Activated naive CD4-positive, alpha-beta T cell treated with anti-CD3 and anti-CD28 coated beads for 36 hours (primary cell): ENCODE measurements at regions of chr2 and their contacts with region 1.

Region 1: DNA sequence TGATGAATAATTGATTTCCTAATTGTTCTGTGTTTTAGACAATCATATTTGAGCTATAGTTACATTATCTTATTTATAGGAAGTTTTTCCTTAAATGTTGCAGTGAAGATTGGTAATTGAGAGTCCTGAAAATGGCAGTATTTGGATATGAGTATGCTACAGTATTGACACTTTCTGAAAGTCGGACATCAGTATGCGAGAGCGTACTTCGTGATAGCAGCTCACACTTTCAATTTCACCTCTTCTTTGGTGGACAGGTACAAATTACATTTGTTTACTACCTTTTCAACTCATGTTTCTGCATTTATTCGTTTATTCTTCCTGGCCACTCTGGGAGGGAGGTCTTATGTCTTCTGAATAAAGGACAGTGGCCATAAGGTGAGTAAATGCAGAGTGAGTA is 38.7 kb downstream of the EML4 start:
- DNase-seq: no peak
- H3K4me3 Mint-ChIP-seq: no peak overlapping the region
- H3K27ac Mint-ChIP-seq: no peak overlapping the region
- H3K4me1 Mint-ChIP-seq: peaks cover 46% of the 10 kb centered on the region
- H3K27me3 Mint-ChIP-seq: no peaks in the 10 kb centered on the region

Region 2: DNA sequence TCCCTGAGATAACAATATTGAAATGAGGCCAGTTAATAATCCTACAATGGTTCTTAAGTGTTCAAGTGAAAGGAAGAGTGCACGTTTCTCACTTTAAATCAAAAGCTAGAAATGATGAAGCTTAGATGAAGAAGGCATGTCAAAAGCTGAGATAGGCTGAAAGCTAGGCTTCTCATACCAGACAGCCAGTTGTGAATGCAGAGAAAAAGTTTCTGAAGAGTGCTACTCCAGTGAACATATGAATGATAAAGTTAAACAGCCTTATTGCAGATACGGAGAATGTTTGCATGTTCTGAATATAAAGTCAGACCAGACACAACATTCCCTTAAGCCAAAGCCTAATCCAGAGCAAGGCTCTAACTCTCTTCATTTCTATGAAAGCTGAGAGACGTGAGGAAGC is 12.7 kb after region 1 on chr2:
- CTCF ChIA-PET with region 1: no interaction called
- intact Hi-C with region 1: loop called (anchors 2 kb)
- DNase-seq: no peak
- H3K4me3 Mint-ChIP-seq: no peak overlapping the region
- H3K27ac Mint-ChIP-seq: no peak overlapping the region
- H3K4me1 Mint-ChIP-seq: peaks cover 73% of the 10 kb centered on the region
- H3K27me3 Mint-ChIP-seq: no peaks in the 10 kb centered on the region